CD4-positive, alpha-beta memory T cell (primary cell): ENCODE measurements at regions of chr9 and their contacts with region 1.

Region 1: GRCh38 chr9:107425101-107426045 is 64.2 kb downstream of the KLF4 start:
- DNase-seq: peak in 4 of 5 donors; percentile 5 to 28 (median 20)
- H3K4me3 ChIP-seq: no peak overlapping the region
- H3K4me3 Mint-ChIP-seq: peak overlapping the region in 6 of 8 donors; percentile 20 to 64 (median 52)
- H3K27ac ChIP-seq: no peak overlapping the region
- H3K27ac Mint-ChIP-seq: no peak overlapping the region
- H3K4me1 ChIP-seq: no peaks in the 10 kb centered on the region
- H3K4me1 Mint-ChIP-seq: peaks cover 1 to 8% (median 4%) of the 10 kb centered on the region in 4 donors
- H3K27me3 ChIP-seq: no peaks in the 10 kb centered on the region
- H3K27me3 Mint-ChIP-seq: peaks cover 4 to 6% of the 10 kb centered on the region in 2 donors

Region 2: GRCh38 chr9:107323836-107324585 is 101.4 kb before region 1 on chr9:
- CTCF ChIA-PET with region 1: no interaction called
- POLR2A ChIA-PET with region 1: no interaction called
- intact Hi-C with region 1: no loop called
- DNase-seq: no peak
- H3K4me3 ChIP-seq: no peak overlapping the region
- H3K4me3 Mint-ChIP-seq: no peak overlapping the region
- H3K27ac ChIP-seq: no peak overlapping the region
- H3K27ac Mint-ChIP-seq: peak overlapping the region in 2 of 7 donors; percentile 9 to 67
- H3K4me1 ChIP-seq: no peaks in the 10 kb centered on the region
- H3K4me1 Mint-ChIP-seq: peaks cover 5 to 14% (median 10%) of the 10 kb centered on the region in 4 donors
- H3K27me3 ChIP-seq: no peaks in the 10 kb centered on the region
- H3K27me3 Mint-ChIP-seq: no peaks in the 10 kb centered on the region

Region 3: GRCh38 chr9:107397723-107398044 is 27.7 kb before region 1 on chr9:
- CTCF ChIA-PET with region 1: interaction called, 11 read pairs
- POLR2A ChIA-PET with region 1: no interaction called
- intact Hi-C with region 1: no loop called
- DNase-seq: no peak
- H3K4me3 ChIP-seq: no peak overlapping the region
- H3K4me3 Mint-ChIP-seq: no peak overlapping the region
- H3K27ac ChIP-seq: no peak overlapping the region
- H3K27ac Mint-ChIP-seq: no peak overlapping the region
- H3K4me1 ChIP-seq: no peaks in the 10 kb centered on the region
- H3K4me1 Mint-ChIP-seq: no peaks in the 10 kb centered on the region
- H3K27me3 ChIP-seq: no peaks in the 10 kb centered on the region
- H3K27me3 Mint-ChIP-seq: peaks cover 5 to 7% of the 10 kb centered on the region in 2 donors

Region 4: GRCh38 chr9:107413315-107413714 is 12.1 kb before region 1 on chr9:
- CTCF ChIA-PET with region 1: interaction called, 10 read pairs
- POLR2A ChIA-PET with region 1: no interaction called
- intact Hi-C with region 1: no loop called
- DNase-seq: no peak
- H3K4me3 ChIP-seq: no peak overlapping the region
- H3K4me3 Mint-ChIP-seq: no peak overlapping the region
- H3K27ac ChIP-seq: no peak overlapping the region
- H3K27ac Mint-ChIP-seq: no peak overlapping the region
- H3K4me1 ChIP-seq: no peaks in the 10 kb centered on the region
- H3K4me1 Mint-ChIP-seq: no peaks in the 10 kb centered on the region
- H3K27me3 ChIP-seq: no peaks in the 10 kb centered on the region
- H3K27me3 Mint-ChIP-seq: peaks cover 2 to 6% of the 10 kb centered on the region in 2 donors

Region 5: GRCh38 chr9:107737987-107738743 is 312.8 kb after region 1 on chr9:
- CTCF ChIA-PET with region 1: no interaction called
- POLR2A ChIA-PET with region 1: no interaction called
- intact Hi-C with region 1: no loop called
- DNase-seq: no peak
- H3K4me3 ChIP-seq: no peak overlapping the region
- H3K4me3 Mint-ChIP-seq: no peak overlapping the region
- H3K27ac ChIP-seq: no peak overlapping the region
- H3K27ac Mint-ChIP-seq: no peak overlapping the region
- H3K4me1 ChIP-seq: no peaks in the 10 kb centered on the region
- H3K4me1 Mint-ChIP-seq: no peaks in the 10 kb centered on the region
- H3K27me3 ChIP-seq: no peaks in the 10 kb centered on the region
- H3K27me3 Mint-ChIP-seq: peaks cover 0 to 1% of the 10 kb centered on the region in 2 donors